ENCODE measurements at regions of chr18 and their contacts with region 1.

Region 1: GRCh38 chr18:48161191-48161910 is 230.9 kb upstream of the SMAD2 start:
- DNase-seq: peak; percentile 92
- ATAC-seq: peak; percentile 96

Region 2: DNA sequence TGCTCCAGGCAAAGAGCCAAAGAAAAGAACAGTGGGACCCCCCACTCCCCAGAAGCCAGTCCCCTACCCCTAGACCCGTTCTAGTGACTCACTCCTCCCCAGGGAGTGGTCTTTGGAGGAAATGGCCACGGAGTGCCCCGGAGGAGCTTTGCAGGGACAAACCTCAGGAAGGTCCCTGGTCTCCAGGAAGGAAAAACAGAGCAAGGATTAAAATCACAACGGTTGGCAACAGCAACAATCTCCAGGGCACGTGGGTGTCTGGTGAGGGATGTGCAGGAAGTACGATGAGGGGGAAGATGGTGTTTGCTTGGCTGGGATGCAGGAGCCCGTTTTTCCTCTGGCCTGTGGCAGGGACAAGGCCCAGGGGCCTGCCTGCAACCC is 365.9 kb before region 1 on chr18:
- intact Hi-C with region 1: no loop called
- DNase-seq: no peak
- ATAC-seq: no peak

Region 3: DNA sequence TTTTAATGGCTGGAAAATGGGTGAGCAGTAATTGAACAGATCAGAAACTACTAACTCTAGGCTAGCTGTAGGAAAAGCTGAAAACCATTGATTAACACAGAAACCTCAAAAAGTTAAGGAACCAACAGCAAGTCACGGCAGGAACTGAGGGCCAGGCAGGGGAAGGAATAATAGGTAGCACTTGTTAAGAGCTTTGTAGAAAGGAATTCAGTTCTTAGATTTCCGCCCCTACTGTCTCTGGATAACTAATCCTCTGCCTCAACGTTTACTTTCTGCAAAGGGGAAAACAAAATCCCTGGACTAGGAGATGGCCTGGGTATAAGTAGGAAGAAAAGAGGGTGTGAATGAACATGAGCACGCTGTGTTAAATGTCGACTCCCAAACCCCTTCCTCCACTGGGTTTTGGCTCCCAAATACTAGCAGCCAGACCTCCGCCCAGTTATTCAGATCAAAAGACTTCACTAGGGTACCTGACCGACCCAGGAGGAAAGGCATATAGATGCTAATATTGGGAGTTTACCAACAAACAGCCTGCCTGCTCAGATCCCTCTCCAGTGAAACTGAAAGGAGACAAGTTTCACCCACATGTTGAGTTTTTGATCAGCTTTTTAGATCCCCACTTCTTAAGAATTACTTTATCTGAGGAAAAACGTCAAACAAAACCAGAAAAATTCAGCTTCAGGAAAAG is 243.3 kb before region 1 on chr18:
- intact Hi-C with region 1: no loop called
- DNase-seq: no peak
- ATAC-seq: no peak

Region 4: GRCh38 chr18:48030616-48031480 is 130.5 kb before region 1 on chr18:
- intact Hi-C with region 1: loop called (anchors 10 kb)
- DNase-seq: peak; percentile 45
- ATAC-seq: peak; percentile 71